Activated naive CD4-positive, alpha-beta T cell treated with anti-CD3 and anti-CD28 coated beads for 36 hours (primary cell): ENCODE measurements at regions of chr2 and their contacts with region 1.

Region 1: DNA sequence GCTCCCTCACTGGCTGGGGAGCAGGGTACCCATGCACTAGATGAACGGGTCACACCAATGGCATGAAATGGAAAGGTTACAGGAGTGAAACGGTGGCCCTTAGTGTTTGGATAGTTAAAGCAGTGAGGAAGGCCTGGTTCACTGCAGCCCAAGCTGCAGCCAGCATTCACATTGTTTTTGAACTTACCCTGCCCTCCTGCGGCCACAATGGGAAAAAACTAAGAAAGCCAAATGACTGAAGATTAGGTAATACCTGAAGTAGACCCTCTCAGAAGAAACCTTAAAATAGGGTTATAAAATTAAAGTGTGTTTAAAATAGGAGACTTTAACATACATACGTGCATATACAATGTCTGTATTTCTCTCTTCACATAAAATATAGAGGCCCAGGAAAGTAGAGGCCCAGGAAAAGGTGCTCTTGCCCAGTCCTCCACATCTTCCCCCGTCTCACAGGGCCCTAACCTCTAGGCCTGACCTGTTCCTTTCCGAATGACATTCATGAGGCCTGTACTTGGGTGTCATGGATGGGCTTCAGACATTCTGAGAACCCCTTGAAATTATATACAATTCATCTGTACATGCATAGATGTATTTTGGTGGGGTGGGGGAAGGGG is 33.3 kb downstream of the DOK1 start:
- DNase-seq: peak; percentile 79
- H3K4me3 Mint-ChIP-seq: no peak overlapping the region
- H3K27ac Mint-ChIP-seq: no peak overlapping the region
- H3K4me1 Mint-ChIP-seq: peaks cover 28% of the 10 kb centered on the region
- H3K27me3 Mint-ChIP-seq: peaks cover 9% of the 10 kb centered on the region

Region 2: DNA sequence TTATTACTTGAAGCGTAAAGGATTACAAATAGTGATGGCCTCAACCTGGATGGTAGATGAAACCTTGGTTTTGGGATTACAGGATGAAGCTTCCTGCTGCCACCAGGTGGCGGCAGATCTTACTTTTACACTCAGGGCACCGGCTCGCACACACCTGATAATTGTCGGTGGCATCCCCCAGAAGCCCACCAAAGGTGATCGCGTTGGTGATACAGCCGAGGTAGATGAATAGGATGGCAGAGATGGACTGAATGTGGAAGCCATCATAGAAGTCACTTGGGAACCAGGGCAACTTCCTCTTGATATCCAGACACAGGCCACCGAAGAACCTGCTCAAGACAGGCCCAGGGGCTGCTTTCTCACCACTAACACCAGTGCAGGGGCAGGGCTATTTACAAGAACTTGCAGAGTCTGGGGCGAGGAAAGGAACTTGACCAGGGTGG is 337.6 kb before region 1 on chr2:
- CTCF ChIA-PET with region 1: interaction called, 21 read pairs
- intact Hi-C with region 1: loop called (anchors 1 kb)
- DNase-seq: peak; percentile 68
- H3K4me3 Mint-ChIP-seq: no peak overlapping the region
- H3K27ac Mint-ChIP-seq: no peak overlapping the region
- H3K4me1 Mint-ChIP-seq: peaks cover 2% of the 10 kb centered on the region
- H3K27me3 Mint-ChIP-seq: no peaks in the 10 kb centered on the region

Region 3: DNA sequence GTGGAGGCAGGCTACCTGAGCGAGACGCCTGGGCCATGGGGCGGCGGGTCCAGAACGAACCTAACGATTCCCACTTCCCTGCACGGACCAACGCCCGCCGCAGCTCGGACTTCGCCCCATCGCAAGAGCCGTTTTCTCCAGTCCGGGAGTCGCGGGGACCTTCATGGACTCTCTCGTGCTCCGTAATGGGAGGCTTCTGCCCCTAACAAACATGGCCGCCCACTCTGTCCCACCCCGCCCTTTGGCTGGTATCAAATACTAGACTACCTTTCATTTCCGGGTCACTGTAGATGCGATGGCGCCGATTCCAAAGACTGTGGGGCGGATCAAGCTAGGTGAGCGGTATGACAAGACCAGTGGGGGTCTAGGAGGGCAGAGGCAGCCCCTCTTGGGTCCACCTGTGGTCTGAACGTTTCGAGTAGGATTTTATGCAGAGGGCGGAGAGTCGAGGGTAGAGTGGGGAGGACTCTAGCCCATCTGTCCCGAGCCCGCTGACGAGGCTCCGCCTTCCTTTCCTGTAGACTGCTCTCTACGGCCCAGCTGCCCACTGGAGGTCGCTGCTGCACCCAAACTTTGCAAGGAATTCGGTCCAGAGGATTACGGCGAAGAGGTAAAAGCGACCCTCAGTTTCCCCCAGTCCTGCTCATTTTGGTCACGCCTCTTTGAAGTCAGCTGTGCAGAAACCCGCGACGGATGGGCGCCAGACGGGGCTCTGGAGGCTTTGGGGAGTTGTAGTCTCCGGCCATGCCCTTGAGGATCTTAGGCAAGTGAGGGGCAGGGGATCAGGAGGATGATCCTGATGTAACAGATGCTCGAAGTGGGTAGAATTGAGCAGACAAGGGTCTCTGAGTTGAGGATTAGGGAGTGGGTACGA is 104.7 kb before region 1 on chr2 and contains the starts of genes CCDC142 and TTC31:
- CTCF ChIA-PET with region 1: interaction called, 144 read pairs
- intact Hi-C with region 1: loop called (anchors 1 kb)
- DNase-seq: peak; percentile 97
- H3K4me3 Mint-ChIP-seq: peak within 1 kb of the TSS; percentile 93
- H3K27ac Mint-ChIP-seq: peak within 1 kb of the TSS; percentile 98
- H3K4me1 Mint-ChIP-seq: peaks cover 32% of the 10 kb centered on the region
- H3K27me3 Mint-ChIP-seq: no peaks in the 10 kb centered on the region
- total RNA-seq, gene CCDC142: 3.7 to 5.8 TPM
- total RNA-seq, gene TTC31: 29.5 to 30.6 TPM

Region 4: DNA sequence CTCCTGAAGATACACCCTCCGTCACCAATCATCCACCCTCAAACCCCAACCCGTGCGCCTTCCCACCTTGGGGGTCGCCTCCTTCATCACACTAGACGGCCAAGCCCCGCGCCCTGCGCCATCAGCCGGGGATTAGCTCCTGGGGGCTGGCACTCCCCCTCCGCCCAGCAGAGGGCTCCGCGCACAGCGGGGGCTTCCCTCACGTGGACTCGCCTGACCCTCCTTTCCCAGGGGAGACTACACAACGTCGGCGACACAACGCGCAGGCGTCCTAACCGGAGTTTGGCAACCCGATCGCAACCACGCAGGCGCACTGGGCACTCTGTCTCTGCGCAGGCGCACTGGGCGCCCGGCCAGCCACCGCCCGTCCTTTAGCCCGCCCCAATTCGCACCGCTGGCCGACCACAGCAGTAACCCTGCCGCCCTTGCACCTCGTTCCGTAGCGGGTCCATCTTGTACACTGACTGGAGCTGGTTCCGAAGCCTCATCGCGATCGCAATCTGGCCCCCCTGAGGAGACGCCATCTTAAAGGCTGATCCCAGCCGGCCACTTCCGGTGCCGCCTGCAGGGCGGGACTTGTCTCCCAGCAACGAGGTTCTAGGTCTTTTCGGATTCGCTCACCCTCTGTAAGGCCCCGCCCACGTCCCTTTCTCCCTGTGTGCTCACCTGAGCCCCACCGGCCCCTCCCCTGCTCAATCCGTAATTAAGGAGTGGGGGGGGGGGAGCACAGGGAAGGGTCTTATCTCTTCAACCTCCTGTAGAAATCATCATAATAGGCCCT is 80.4 kb before region 1 on chr2 and contains the start of gene PCGF1:
- CTCF ChIA-PET with region 1: interaction called, 24 read pairs
- intact Hi-C with region 1: no loop called
- DNase-seq: peak; percentile 99
- H3K4me3 Mint-ChIP-seq: peak within 1 kb of the TSS; percentile 91
- H3K27ac Mint-ChIP-seq: peak within 1 kb of the TSS; percentile 98
- H3K4me1 Mint-ChIP-seq: peaks cover 40% of the 10 kb centered on the region
- H3K27me3 Mint-ChIP-seq: peaks cover 41% of the 10 kb centered on the region
- total RNA-seq, gene PCGF1: 21.1 to 24.4 TPM

Region 5: DNA sequence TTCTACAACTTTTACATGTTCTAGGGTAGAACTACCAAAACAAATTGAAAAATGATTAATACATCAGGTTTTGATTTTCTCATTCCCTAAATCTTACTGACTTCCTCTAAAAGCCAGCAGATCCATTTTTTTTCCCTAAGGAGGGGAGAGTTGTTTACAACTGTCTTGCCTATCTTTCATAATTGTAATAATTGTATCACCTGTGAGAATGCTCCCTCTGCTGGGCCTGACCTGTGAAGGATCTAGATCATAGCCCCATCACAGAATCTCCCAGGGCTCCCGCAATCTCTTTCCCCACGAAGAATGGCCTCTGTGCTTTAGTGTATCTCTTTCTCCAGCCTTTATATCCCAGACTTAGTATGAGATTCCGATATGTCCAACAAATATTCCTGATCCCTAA is 43.1 kb before region 1 on chr2:
- CTCF ChIA-PET with region 1: interaction called, 22 read pairs
- intact Hi-C with region 1: no loop called
- DNase-seq: peak; percentile 48
- H3K4me3 Mint-ChIP-seq: no peak overlapping the region
- H3K27ac Mint-ChIP-seq: no peak overlapping the region
- H3K4me1 Mint-ChIP-seq: peaks cover 3% of the 10 kb centered on the region
- H3K27me3 Mint-ChIP-seq: peaks cover 35% of the 10 kb centered on the region

Region 6: GRCh38 chr2:74573747-74574562 is 13.8 kb before region 1 on chr2:
- CTCF ChIA-PET with region 1: interaction called, 144 read pairs
- intact Hi-C with region 1: loop called (anchors 1 kb)
- DNase-seq: peak; percentile 52
- H3K4me3 Mint-ChIP-seq: peak overlapping the region; percentile 38
- H3K27ac Mint-ChIP-seq: peak overlapping the region; percentile 68
- H3K4me1 Mint-ChIP-seq: peaks cover 34% of the 10 kb centered on the region
- H3K27me3 Mint-ChIP-seq: no peaks in the 10 kb centered on the region

Region 7: GRCh38 chr2:75720526-75720925 is 1132.8 kb after region 1 on chr2:
- CTCF ChIA-PET with region 1: no interaction called
- intact Hi-C with region 1: no loop called
- DNase-seq: no peak
- H3K4me3 Mint-ChIP-seq: no peak overlapping the region
- H3K27ac Mint-ChIP-seq: no peak overlapping the region
- H3K4me1 Mint-ChIP-seq: no peaks in the 10 kb centered on the region
- H3K27me3 Mint-ChIP-seq: peaks cover 12% of the 10 kb centered on the region